ENCODE measurements at regions of chr19 and their contacts with region 1.

Region 1: GRCh38 chr19:28061111-28061510 is 1151.8 kb downstream of the UQCRFS1 start:
- DNase-seq: no peak
- CTCF ChIP-seq: no peak

Region 2: GRCh38 chr19:27935669-27936068 is 125.4 kb before region 1 on chr19:
- CTCF ChIA-PET with region 1: no interaction called
- POLR2A ChIA-PET with region 1: no interaction called
- DNase-seq: no peak
- CTCF ChIP-seq: no peak

Region 3: DNA sequence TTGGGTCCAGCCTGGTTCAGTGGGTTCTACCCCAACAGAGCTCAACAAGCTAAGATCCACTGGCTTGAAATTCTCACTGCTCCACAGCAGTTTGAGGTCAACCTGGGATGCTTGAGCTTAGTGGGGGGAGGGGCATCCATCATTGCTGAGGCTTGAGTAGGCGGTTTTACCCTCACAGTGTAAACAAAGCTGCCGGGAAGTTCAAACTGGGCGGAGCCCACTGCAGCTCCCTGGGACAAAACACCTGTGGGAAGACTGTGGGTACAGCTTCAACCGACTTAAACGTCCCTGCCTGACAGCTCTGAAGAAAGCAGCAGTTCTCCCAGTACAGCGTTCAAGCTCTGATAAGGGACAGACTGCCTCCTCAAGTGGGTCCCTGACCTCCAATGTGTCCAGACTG is 10.1 kb before region 1 on chr19:
- CTCF ChIA-PET with region 1: interaction called, 24 read pairs
- POLR2A ChIA-PET with region 1: no interaction called
- DNase-seq: no peak
- CTCF ChIP-seq: no peak

Region 4: GRCh38 chr19:28117143-28117542 is 56.0 kb after region 1 on chr19:
- CTCF ChIA-PET with region 1: no interaction called
- POLR2A ChIA-PET with region 1: no interaction called
- DNase-seq: no peak
- CTCF ChIP-seq: no peak

Measured in GM10248 (cell line).